T-cell (primary cell): ENCODE measurements at regions of chr22 and their contacts with region 1.

Region 1: GRCh38 chr22:46367707-46368191 is 32.2 kb downstream of the TRMU start:
- DNase-seq: peak; percentile 32 to 86 (median 60)
- ATAC-seq: peak; percentile 50 to 73 (median 54)
- H3K4me3 ChIP-seq: peak overlapping the region; percentile 4 to 56
- H3K4me3 Mint-ChIP-seq: peak overlapping the region in 2 of 3 donors; percentile 8 to 58
- H3K27ac ChIP-seq: no peak overlapping the region
- H3K27ac Mint-ChIP-seq: no peak overlapping the region
- H3K4me1 ChIP-seq: peaks cover 2 to 67% of the 10 kb centered on the region in 2 experiments
- H3K4me1 Mint-ChIP-seq: peaks cover 20 to 36% (median 32%) of the 10 kb centered on the region in 3 donors
- H3K27me3 ChIP-seq: peaks cover 0 to 53% of the 10 kb centered on the region in 2 experiments
- H3K27me3 Mint-ChIP-seq: peaks cover 9 to 16% of the 10 kb centered on the region in 2 donors

Region 2: DNA sequence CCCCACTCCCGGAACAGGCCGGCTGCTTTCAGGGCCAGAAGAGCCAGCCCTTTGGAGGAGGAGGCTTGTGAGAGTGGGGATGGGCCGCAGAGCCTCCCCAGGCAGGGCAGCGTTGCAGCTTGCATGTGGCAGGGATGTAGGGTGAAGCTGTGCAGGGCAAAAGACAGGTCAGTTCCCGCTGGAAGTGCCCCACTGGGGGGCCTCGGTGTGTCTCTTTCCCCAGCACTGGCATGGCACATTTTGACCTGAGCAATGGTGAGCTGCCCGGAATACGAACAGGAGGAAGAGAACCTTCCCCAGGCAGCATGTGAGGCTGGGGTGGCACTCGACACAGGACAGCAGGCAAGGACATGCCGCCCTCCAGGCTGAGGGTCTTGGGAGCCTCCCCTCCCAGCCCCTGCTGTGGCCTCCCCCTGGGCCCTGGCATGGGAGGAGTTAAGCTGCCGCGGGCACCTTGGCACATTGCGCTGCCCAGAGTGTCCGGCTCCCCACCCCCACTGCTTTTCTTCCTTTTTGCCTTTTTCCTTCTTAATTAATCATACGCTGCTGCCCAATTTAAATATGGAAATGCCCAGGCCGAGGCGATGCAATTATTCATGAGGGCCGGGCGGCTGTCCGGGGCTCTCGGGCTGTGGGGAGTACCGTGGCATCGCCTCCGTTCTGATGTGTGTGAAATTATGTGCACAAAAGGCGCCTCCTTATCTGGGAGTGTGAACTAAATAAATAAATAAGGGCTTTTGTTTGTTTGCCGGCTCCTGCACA is 314.8 kb before region 1 on chr22:
- CTCF ChIA-PET with region 1: no interaction called
- POLR2A ChIA-PET with region 1: no interaction called
- DNase-seq: no peak
- ATAC-seq: peak in 1 of 4 experiments; percentile 1
- H3K4me3 ChIP-seq: peak overlapping the region in 1 of 2 donors; percentile 54
- H3K4me3 Mint-ChIP-seq: peak overlapping the region; percentile 88 to 94 (median 92)
- H3K27ac ChIP-seq: peak overlapping the region; percentile 78
- H3K27ac Mint-ChIP-seq: peak overlapping the region; percentile 98 to 99
- H3K4me1 ChIP-seq: peaks cover 0 to 52% of the 10 kb centered on the region in 2 experiments
- H3K4me1 Mint-ChIP-seq: peaks cover 48 to 74% (median 61%) of the 10 kb centered on the region in 3 donors
- H3K27me3 ChIP-seq: no peaks in the 10 kb centered on the region
- H3K27me3 Mint-ChIP-seq: no peaks in the 10 kb centered on the region

Region 3: GRCh38 chr22:46328782-46329181 is 39.0 kb before region 1 on chr22:
- CTCF ChIA-PET with region 1: no interaction called
- POLR2A ChIA-PET with region 1: no interaction called
- DNase-seq: no peak
- ATAC-seq: no peak
- H3K4me3 ChIP-seq: no peak overlapping the region
- H3K4me3 Mint-ChIP-seq: no peak overlapping the region
- H3K27ac ChIP-seq: no peak overlapping the region
- H3K27ac Mint-ChIP-seq: no peak overlapping the region
- H3K4me1 ChIP-seq: no peaks in the 10 kb centered on the region
- H3K4me1 Mint-ChIP-seq: no peaks in the 10 kb centered on the region
- H3K27me3 ChIP-seq: no peaks in the 10 kb centered on the region
- H3K27me3 Mint-ChIP-seq: no peaks in the 10 kb centered on the region

Region 4: GRCh38 chr22:46346680-46347405 is 20.9 kb before region 1 on chr22:
- CTCF ChIA-PET with region 1: no interaction called
- POLR2A ChIA-PET with region 1: no interaction called
- DNase-seq: no peak
- ATAC-seq: no peak
- H3K4me3 ChIP-seq: no peak overlapping the region
- H3K4me3 Mint-ChIP-seq: no peak overlapping the region
- H3K27ac ChIP-seq: no peak overlapping the region
- H3K27ac Mint-ChIP-seq: no peak overlapping the region
- H3K4me1 ChIP-seq: no peaks in the 10 kb centered on the region
- H3K4me1 Mint-ChIP-seq: peaks cover 1 to 16% (median 2%) of the 10 kb centered on the region in 3 donors
- H3K27me3 ChIP-seq: no peaks in the 10 kb centered on the region
- H3K27me3 Mint-ChIP-seq: no peaks in the 10 kb centered on the region

Region 5: GRCh38 chr22:46499805-46500189 is 132.0 kb after region 1 on chr22:
- CTCF ChIA-PET with region 1: no interaction called
- POLR2A ChIA-PET with region 1: interaction called in 1 of 2 experiments, 10 read pairs
- DNase-seq: no peak
- ATAC-seq: no peak
- H3K4me3 ChIP-seq: no peak overlapping the region
- H3K4me3 Mint-ChIP-seq: no peak overlapping the region
- H3K27ac ChIP-seq: no peak overlapping the region
- H3K27ac Mint-ChIP-seq: no peak overlapping the region
- H3K4me1 ChIP-seq: peaks cover 5 to 13% of the 10 kb centered on the region in 2 experiments
- H3K4me1 Mint-ChIP-seq: peaks cover 11 to 19% (median 15%) of the 10 kb centered on the region in 3 donors
- H3K27me3 ChIP-seq: peaks cover 0 to 36% of the 10 kb centered on the region in 2 experiments
- H3K27me3 Mint-ChIP-seq: peaks cover 14 to 40% of the 10 kb centered on the region in 2 donors

Region 6: GRCh38 chr22:46522797-46523196 is 155.0 kb after region 1 on chr22:
- CTCF ChIA-PET with region 1: no interaction called
- POLR2A ChIA-PET with region 1: no interaction called
- DNase-seq: no peak
- ATAC-seq: no peak
- H3K4me3 ChIP-seq: no peak overlapping the region
- H3K4me3 Mint-ChIP-seq: no peak overlapping the region
- H3K27ac ChIP-seq: no peak overlapping the region
- H3K27ac Mint-ChIP-seq: no peak overlapping the region
- H3K4me1 ChIP-seq: no peaks in the 10 kb centered on the region
- H3K4me1 Mint-ChIP-seq: no peaks in the 10 kb centered on the region
- H3K27me3 ChIP-seq: peaks cover 0 to 35% of the 10 kb centered on the region in 2 experiments
- H3K27me3 Mint-ChIP-seq: peaks cover 12 to 21% of the 10 kb centered on the region in 2 donors

Region 7: DNA sequence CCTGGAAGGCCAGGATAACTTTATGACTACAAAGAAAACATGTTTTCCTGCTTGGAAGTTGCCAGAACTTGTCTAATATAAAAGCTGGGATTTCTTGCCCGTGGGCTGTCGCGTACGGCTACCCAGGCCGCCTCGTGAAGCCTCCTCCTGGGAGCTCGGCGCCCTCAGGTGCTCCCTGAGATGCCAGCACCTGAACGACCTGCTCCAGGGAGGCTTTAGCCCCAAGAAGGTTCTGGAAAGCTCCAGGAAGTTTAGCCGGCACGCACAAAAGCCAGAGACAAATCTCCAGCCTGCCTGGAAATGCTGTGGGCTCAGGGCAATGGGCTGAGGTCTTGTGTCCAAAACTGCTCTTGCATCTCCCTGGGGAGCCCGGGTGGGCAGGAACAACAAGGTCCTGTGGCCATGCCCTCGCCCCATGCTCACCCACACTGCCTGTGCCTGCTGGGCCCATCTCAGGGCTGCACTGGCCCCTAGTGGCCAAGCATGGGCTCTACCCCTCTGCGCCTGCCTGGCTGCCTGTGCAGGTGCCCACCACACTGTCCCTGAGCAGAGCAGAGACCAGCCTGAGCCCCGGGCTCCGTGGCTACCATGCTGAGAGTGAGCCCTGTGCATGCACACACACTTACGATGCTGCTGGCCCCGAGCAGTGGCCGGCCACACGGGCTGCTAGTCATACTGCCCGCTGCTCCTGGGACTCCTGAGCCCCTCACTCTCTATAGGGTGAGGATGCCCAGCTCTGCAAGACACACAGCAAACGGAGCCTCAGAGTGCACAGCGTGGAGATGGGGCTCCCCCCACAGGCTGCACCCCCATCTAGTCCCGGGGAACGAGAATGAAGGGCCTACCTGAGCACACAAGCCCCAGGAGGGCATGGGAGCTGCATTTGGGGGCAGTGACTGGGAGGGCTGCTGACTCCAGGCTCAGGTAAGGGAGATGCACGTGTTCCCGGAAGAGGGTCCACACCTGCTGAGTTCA is 174.5 kb after region 1 on chr22:
- CTCF ChIA-PET with region 1: interaction called, 5 to 19 read pairs
- POLR2A ChIA-PET with region 1: no interaction called
- DNase-seq: peak; percentile 21 to 81 (median 65)
- ATAC-seq: peak; percentile 96 to 99 (median 98)
- H3K4me3 ChIP-seq: no peak overlapping the region
- H3K4me3 Mint-ChIP-seq: no peak overlapping the region
- H3K27ac ChIP-seq: no peak overlapping the region
- H3K27ac Mint-ChIP-seq: no peak overlapping the region
- H3K4me1 ChIP-seq: peaks cover 0 to 16% of the 10 kb centered on the region in 2 experiments
- H3K4me1 Mint-ChIP-seq: peaks cover 0 to 11% (median 10%) of the 10 kb centered on the region in 3 donors
- H3K27me3 ChIP-seq: peaks cover 2 to 60% of the 10 kb centered on the region in 2 experiments
- H3K27me3 Mint-ChIP-seq: peaks cover 31 to 47% of the 10 kb centered on the region in 2 donors